Activated CD4-positive, alpha-beta T cell treated with anti-CD3 and anti-CD28 coated beads, Interleukin-2, amount 10 ng/mL, durations not matched to agents 24 days and 14 days (primary cell): ENCODE measurements at regions of chrX and their contacts with region 1.

Region 1: GRCh38 chrX:30652527-30653414 is 452 bp upstream of the GK start:
- DNase-seq: peak; percentile 97
- H3K4me3 Mint-ChIP-seq: peak overlapping the region; percentile 92
- H3K27ac Mint-ChIP-seq: peak overlapping the region; percentile 99
- H3K4me1 Mint-ChIP-seq: peaks cover 33% of the 10 kb centered on the region
- H3K27me3 Mint-ChIP-seq: no peaks in the 10 kb centered on the region

Region 2: GRCh38 chrX:30831082-30831481 is 178.3 kb after region 1 on chrX:
- intact Hi-C with region 1: loop called (anchors 5 kb)
- DNase-seq: peak; percentile 83
- H3K4me3 Mint-ChIP-seq: peak overlapping the region; percentile 78
- H3K27ac Mint-ChIP-seq: peak overlapping the region; percentile 82
- H3K4me1 Mint-ChIP-seq: peaks cover 21% of the 10 kb centered on the region
- H3K27me3 Mint-ChIP-seq: no peaks in the 10 kb centered on the region